Activated CD4-positive, alpha-beta T cell treated with anti-CD3 and anti-CD28 coated beads, Interleukin-2, amount 10 ng/mL, durations not matched to agents 24 days and 14 days (primary cell): ENCODE measurements at regions of chr5 and their contacts with region 1.

Region 1: GRCh38 chr5:150409638-150410523 is 2.8 kb downstream of the CD74 start:
- DNase-seq: peak; percentile 85
- H3K4me3 Mint-ChIP-seq: peak overlapping the region; percentile 96
- H3K27ac Mint-ChIP-seq: peak overlapping the region; percentile 98
- H3K4me1 Mint-ChIP-seq: peaks cover 34% of the 10 kb centered on the region
- H3K27me3 Mint-ChIP-seq: no peaks in the 10 kb centered on the region

Region 2: GRCh38 chr5:150000256-150000989 is 409.5 kb before region 1 on chr5 and contains the starts of genes HMGXB3 and TIGD6:
- intact Hi-C with region 1: loop called (anchors 2 kb)
- DNase-seq: peak; percentile 96
- H3K4me3 Mint-ChIP-seq: peak within 1 kb of the TSS; percentile 86
- H3K27ac Mint-ChIP-seq: peak within 1 kb of the TSS; percentile 97
- H3K4me1 Mint-ChIP-seq: peaks cover 41% of the 10 kb centered on the region
- H3K27me3 Mint-ChIP-seq: no peaks in the 10 kb centered on the region
- total RNA-seq, gene HMGXB3: 43.1 and 47.8 TPM in 2 replicates
- total RNA-seq, gene TIGD6: 2.5 TPM in 2 replicates

Region 3: GRCh38 chr5:150436141-150436680 is 26.3 kb after region 1 on chr5:
- intact Hi-C with region 1: loop called (anchors 1 kb)
- DNase-seq: peak; percentile 97
- H3K4me3 Mint-ChIP-seq: peak overlapping the region; percentile 56
- H3K27ac Mint-ChIP-seq: peak overlapping the region; percentile 75
- H3K4me1 Mint-ChIP-seq: peaks cover 8% of the 10 kb centered on the region
- H3K27me3 Mint-ChIP-seq: no peaks in the 10 kb centered on the region

Region 4: GRCh38 chr5:150449517-150450339 is 39.8 kb after region 1 on chr5 and contains the start of gene RPS14:
- intact Hi-C with region 1: loop called (anchors 1 kb)
- DNase-seq: peak; percentile 98
- H3K4me3 Mint-ChIP-seq: peak within 1 kb of the TSS; percentile 93
- H3K27ac Mint-ChIP-seq: peak within 1 kb of the TSS; percentile 97
- H3K4me1 Mint-ChIP-seq: peaks cover 24% of the 10 kb centered on the region
- H3K27me3 Mint-ChIP-seq: no peaks in the 10 kb centered on the region
- total RNA-seq, gene RPS14: 2,567 and 2,587 TPM in 2 replicates

Region 5: GRCh38 chr5:150637245-150638052 is 227.6 kb after region 1 on chr5:
- intact Hi-C with region 1: no loop called
- DNase-seq: no peak
- H3K4me3 Mint-ChIP-seq: no peak overlapping the region
- H3K27ac Mint-ChIP-seq: no peak overlapping the region
- H3K4me1 Mint-ChIP-seq: no peaks in the 10 kb centered on the region
- H3K27me3 Mint-ChIP-seq: peaks cover 21% of the 10 kb centered on the region

Region 6: GRCh38 chr5:150801117-150801927 is 391.4 kb after region 1 on chr5:
- intact Hi-C with region 1: no loop called
- DNase-seq: peak; percentile 77
- H3K4me3 Mint-ChIP-seq: no peak overlapping the region
- H3K27ac Mint-ChIP-seq: peak overlapping the region; percentile 68
- H3K4me1 Mint-ChIP-seq: peaks cover 17% of the 10 kb centered on the region
- H3K27me3 Mint-ChIP-seq: peaks cover 8% of the 10 kb centered on the region

Region 7: DNA sequence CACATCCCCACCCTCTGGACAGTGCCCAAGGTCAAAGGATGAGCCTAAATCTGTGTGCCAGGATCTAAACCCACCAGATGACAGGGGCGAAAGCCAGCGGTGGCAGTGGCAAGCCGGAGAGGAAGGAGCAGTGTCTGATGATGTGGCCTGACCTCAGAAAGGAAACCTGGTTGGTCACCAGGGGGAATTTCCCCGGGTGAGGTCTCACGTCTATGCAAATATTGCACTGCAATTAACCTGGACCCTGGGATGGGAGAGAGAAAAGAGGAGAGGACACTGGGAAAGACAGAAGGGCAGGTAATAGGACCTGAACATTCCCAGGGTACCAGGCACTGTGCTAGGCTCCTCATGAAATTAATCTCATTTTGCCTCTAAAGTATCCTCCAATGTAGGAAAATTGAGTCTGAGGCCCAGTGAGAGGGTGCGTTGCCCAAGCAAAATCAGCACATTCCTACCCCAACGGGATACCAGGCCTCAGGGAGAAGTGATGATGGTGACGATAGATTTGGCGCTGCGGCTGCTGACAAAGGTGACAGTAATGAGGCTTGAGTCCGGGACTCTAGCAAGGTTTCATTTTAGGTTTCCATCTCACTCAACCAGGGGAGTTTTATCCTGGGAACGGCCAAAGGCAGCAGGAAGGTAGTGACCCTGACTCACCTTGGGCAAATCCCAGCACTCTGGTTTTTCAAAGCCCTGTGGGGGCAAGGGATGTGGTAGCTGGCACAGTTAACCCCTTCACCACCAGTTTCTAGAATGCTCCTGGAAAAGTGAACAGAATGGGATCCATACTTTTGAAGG is 684.4 kb after region 1 on chr5:
- intact Hi-C with region 1: loop called (anchors 5 kb)
- DNase-seq: peak; percentile 88
- H3K4me3 Mint-ChIP-seq: peak overlapping the region; percentile 74
- H3K27ac Mint-ChIP-seq: peak overlapping the region; percentile 90
- H3K4me1 Mint-ChIP-seq: peaks cover 63% of the 10 kb centered on the region
- H3K27me3 Mint-ChIP-seq: no peaks in the 10 kb centered on the region

Region 8: DNA sequence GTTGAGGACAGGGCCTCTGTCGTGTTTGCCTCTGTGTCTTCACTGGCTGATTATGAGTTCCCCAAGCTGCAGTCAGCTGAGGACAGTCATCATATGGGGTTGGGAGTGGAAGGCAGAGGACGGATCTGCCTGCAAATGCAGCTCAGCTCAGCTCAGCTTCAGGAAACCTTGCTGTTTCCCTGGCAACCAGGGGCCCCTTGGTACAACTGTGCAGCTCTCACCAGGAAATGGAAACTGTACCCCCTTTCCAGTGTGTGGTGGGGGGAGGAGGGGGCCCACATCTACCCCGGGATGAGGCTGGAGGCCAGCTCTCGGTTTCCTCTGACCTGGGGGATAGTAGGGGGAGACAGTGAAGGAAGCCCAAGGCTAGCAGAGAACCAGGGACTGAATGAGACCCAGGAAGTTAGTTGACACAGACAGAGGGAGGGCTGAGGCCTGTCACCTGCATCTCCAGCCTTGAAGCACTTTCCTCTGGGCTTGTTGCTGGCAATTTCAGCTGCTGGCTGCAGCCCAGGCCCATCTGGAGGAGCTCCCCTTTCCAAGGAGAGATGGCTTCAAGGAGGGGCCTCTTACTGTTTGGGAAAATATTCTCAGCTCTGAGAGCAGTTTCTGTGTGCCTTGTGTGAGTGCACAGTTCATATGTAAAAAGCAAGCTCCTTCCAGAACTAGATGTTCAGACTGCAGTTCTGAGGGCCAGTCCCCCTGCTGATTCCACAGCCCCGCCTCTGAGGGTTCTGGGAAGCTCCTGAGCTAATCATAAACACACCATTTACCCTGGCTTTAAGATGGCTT is 740.8 kb after region 1 on chr5:
- intact Hi-C with region 1: loop called (anchors 5 kb)
- DNase-seq: peak; percentile 93
- H3K4me3 Mint-ChIP-seq: peak overlapping the region; percentile 66
- H3K27ac Mint-ChIP-seq: peak overlapping the region; percentile 88
- H3K4me1 Mint-ChIP-seq: peaks cover 81% of the 10 kb centered on the region
- H3K27me3 Mint-ChIP-seq: no peaks in the 10 kb centered on the region